Activated B cell treated with CpG ODN at 0.5 μM for 24 hours (primary cell): ENCODE measurements at regions of chr1 and their contacts with region 1.

Region 1: DNA sequence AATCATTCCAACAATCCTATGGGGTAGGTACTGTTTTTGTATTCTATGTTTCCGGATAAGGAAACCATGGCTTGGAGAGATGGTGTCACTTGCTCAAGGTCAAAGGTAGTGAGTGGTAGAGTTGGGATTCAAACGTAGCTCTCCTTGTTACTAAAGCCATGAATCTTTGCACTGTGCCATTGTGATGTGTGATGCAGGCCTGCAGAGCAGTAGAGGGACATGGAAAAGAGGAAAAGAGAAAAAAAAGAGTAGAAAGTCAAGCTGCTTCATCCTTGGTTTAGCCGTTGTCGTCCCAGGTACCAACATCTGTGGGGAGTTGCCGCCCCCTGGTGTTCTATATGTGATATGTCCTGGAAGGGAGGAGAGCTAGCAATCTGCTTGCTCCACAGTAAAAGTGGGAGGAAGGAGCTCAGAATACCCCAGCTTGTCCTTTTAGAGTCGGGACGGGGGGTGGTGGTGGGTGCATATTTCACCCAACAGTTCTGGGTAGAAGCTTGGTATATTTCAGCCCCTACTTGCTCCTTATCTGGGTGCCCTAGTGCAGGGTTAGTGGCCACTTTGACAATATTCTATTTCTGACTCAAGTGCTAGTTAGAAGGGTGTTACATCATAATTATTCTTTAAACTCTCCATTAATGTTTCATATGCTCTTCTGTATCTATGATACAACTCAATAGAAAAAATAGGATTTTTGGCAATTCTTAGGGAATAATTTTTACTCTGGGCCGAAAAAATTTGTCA is 98.4 kb downstream of the EBNA1BP2 start:
- DNase-seq: peak; percentile 56
- ATAC-seq: peak; percentile 87
- H3K4me3 Mint-ChIP-seq: peak overlapping the region; percentile 11
- H3K27ac Mint-ChIP-seq: peak overlapping the region; percentile 6
- H3K4me1 Mint-ChIP-seq: peaks cover 29% of the 10 kb centered on the region
- H3K27me3 Mint-ChIP-seq: no peaks in the 10 kb centered on the region
- CTCF ChIP-seq: peak; percentile 30

Region 2: GRCh38 chr1:42777852-42778251 is 295.8 kb before region 1 on chr1:
- CTCF ChIA-PET with region 1: interaction called, 52 read pairs
- POLR2A ChIA-PET with region 1: interaction called, 4 read pairs
- intact Hi-C with region 1: loop called (anchors 1 kb)
- DNase-seq: no peak
- ATAC-seq: peak; percentile 71
- H3K4me3 Mint-ChIP-seq: no peak overlapping the region
- H3K27ac Mint-ChIP-seq: no peak overlapping the region
- H3K4me1 Mint-ChIP-seq: peaks cover 4% of the 10 kb centered on the region
- H3K27me3 Mint-ChIP-seq: no peaks in the 10 kb centered on the region
- CTCF ChIP-seq: no peak

Region 3: DNA sequence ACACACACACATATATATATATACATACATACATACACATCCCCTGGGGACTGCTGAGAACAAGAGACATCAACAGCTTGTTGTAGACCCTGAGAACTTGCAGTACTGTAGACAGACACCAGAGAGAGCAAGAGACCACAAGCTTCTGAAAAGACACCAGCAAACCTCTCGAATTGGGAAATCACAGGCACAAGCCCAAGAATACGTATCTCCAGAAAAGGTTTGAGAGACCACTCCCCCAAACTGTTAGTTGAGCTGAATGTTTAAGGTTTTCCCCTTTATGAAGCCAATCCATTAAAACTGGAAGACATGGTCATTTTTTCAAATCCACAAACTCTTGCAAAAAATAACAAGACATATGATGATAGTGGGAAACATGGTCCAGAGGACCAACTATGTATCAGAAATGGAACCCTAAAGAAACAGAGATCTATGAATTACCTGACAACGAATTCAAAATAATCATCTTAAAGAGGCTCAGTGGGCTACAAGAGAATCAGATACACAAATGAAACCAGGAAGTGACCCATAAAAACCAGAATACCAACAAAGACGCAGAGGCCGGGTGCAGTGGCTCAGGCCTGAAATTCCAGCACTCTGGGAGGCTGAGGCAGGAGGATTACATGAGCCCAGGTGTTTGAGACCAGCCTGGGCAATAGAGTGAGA is 160.1 kb before region 1 on chr1:
- CTCF ChIA-PET with region 1: interaction called, 523 read pairs
- POLR2A ChIA-PET with region 1: interaction called, 50 read pairs
- intact Hi-C with region 1: loop called (anchors 1 kb)
- DNase-seq: no peak
- ATAC-seq: peak; percentile 99
- H3K4me3 Mint-ChIP-seq: no peak overlapping the region
- H3K27ac Mint-ChIP-seq: no peak overlapping the region
- H3K4me1 Mint-ChIP-seq: peaks cover 6% of the 10 kb centered on the region
- H3K27me3 Mint-ChIP-seq: no peaks in the 10 kb centered on the region
- CTCF ChIP-seq: peak; percentile 55

Region 4: DNA sequence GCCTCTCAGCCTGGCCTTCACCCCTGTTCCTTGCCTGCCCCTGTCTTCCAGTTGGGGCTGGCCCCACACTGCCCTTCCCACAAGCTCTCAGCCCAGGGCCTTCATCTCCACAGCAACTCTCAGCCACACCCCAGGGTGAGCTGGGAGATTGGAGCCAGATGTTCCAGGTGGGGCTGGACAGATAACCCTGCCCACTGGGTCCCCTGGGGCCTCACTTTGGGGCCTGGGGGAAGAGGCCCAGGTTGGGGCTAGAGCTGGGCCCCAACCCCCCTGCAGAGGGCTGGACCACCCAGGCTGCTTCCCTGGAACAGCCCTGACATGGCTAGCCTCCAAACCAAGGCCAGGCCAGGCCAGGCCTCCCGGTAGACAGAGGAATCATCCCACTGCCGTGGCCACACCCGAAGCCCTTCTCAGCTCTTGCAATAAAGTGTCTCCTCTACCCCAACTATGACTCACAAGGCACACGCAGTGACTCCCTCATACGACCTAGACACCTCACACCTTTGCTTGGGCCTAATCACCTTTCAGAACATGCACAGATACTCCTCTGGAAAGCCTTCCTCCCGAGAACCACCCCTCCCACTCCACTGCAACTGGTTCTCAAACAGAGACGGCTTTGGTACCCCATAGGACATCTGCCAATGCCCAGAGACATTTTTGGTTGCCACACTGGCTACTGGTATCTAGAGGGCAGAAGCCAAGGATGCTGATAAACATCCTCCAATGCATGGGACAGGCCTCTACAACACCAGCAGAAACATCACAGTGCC is 137.2 kb before region 1 on chr1:
- CTCF ChIA-PET with region 1: interaction called, 17 read pairs
- POLR2A ChIA-PET with region 1: interaction called, 22 read pairs
- intact Hi-C with region 1: loop called (anchors 1 kb)
- DNase-seq: peak; percentile 19
- ATAC-seq: no peak
- H3K4me3 Mint-ChIP-seq: peak overlapping the region; percentile 67
- H3K27ac Mint-ChIP-seq: peak overlapping the region; percentile 91
- H3K4me1 Mint-ChIP-seq: peaks cover 100% of the 10 kb centered on the region
- H3K27me3 Mint-ChIP-seq: no peaks in the 10 kb centered on the region
- CTCF ChIP-seq: no peak

Region 5: GRCh38 chr1:43049481-43049880 is 24.2 kb before region 1 on chr1:
- CTCF ChIA-PET with region 1: interaction called, 10 read pairs
- POLR2A ChIA-PET with region 1: no interaction called
- intact Hi-C with region 1: no loop called
- DNase-seq: no peak
- ATAC-seq: no peak
- H3K4me3 Mint-ChIP-seq: no peak overlapping the region
- H3K27ac Mint-ChIP-seq: no peak overlapping the region
- H3K4me1 Mint-ChIP-seq: no peaks in the 10 kb centered on the region
- H3K27me3 Mint-ChIP-seq: peaks cover 4% of the 10 kb centered on the region
- CTCF ChIP-seq: no peak